ENCODE measurements at regions of chr13 and their contacts with region 1.

Region 1: DNA sequence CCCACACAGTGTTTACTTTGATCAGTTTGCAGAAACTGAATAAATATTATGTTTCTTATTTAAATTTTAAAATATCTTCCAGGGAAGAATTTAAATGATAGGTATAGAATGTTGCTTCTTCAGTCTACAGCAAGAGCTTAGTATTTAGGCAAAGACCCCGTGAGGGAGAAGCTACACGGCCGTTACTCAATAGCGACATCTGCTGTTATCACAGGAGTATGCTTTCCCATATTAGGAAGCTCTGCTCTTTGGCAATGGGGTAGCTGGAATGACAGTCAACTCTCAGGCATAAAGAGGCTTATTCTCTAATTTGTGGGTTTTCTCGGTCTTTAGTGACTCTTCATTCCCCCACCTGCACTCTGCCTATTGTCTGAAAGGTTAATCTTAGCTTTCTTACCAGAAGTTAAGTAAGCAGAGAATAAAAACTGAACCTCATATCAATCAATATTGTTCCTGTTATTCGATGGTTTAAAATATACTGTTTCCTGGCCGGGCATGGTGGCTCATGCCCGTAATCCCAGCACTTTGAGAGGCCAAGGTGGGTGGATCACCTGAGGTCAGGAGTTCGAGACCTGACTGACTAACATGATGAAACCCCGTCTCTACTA is 13.2 kb upstream of the LHFPL6 start:
- DNase-seq: peak; percentile 70
- H3K4me3 ChIP-seq: no peak overlapping the region
- H3K27ac ChIP-seq: no peak overlapping the region
- H3K4me1 ChIP-seq: no peaks in the 10 kb centered on the region
- H3K27me3 ChIP-seq: peaks cover 5 to 7% of the 10 kb centered on the region in 2 experiments
- CTCF ChIP-seq: peak; percentile 83 to 85
- POLR2A ChIP-seq: no peak

Region 2: GRCh38 chr13:38255296-38255995 is 1360.7 kb before region 1 on chr13:
- CTCF ChIA-PET with region 1: no interaction called
- POLR2A ChIA-PET with region 1: no interaction called
- dilution Hi-C with region 1: no loop called
- intact Hi-C with region 1: no loop called
- DNase-seq: no peak
- H3K4me3 ChIP-seq: no peak overlapping the region
- H3K27ac ChIP-seq: no peak overlapping the region
- H3K4me1 ChIP-seq: no peaks in the 10 kb centered on the region
- H3K27me3 ChIP-seq: no peaks in the 10 kb centered on the region
- CTCF ChIP-seq: no peak
- POLR2A ChIP-seq: no peak

Region 3: DNA sequence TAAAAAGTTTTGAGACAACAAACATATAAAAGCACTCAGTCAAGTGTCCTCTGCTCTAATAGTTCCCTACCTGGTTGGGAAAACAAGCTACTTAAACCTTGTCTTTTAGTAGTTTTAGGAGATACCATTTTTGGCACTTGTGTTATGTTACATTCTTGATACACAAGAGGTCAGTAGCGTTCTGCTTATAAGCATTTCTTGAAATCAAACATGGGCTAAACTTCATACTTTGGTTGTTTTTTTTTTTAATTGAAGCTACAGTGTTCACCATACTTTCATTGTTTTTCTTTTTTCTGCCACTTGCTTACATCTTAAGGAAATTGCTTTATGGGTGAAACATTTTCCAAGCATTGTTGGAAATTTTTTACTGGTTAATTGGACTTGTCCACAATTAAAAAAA is 565.0 kb before region 1 on chr13:
- CTCF ChIA-PET with region 1: interaction called, 129 read pairs
- POLR2A ChIA-PET with region 1: no interaction called
- dilution Hi-C with region 1: no loop called
- intact Hi-C with region 1: loop called (anchors 1 kb)
- DNase-seq: peak; percentile 57
- H3K4me3 ChIP-seq: no peak overlapping the region
- H3K27ac ChIP-seq: no peak overlapping the region
- H3K4me1 ChIP-seq: no peaks in the 10 kb centered on the region
- H3K27me3 ChIP-seq: no peaks in the 10 kb centered on the region
- CTCF ChIP-seq: peak; percentile 18 to 31
- POLR2A ChIP-seq: no peak

Region 4: DNA sequence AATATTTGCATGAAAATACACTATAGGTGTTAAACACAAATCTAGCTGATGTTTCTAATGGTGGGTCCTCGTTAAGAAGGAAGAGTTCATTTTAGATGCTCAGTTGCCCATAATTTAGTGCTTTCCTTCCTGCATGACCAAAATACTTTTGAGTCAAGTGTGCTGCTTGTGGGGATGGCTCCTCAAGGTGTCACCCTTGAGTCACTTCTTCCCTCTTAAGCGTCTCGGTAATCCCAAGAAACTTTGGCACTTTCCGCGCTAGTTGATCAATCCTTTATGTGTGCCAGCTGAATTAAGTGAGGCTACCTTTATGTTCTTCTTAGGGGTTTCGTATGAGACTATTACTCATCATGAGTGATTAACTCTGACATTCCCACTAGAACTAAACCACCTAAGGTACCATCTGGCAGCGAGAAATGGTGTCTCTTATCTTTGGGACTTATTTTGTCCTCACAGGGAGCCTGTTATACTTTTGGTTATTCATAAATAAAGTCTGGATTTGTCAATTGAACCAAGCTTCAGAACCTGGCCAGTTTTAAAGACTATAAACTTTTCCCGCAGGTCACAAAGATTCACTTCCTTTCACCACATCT is 471.2 kb before region 1 on chr13:
- CTCF ChIA-PET with region 1: interaction called, 149 read pairs
- POLR2A ChIA-PET with region 1: no interaction called
- dilution Hi-C with region 1: no loop called
- intact Hi-C with region 1: loop called (anchors 1 kb)
- DNase-seq: peak; percentile 65
- H3K4me3 ChIP-seq: no peak overlapping the region
- H3K27ac ChIP-seq: no peak overlapping the region
- H3K4me1 ChIP-seq: no peaks in the 10 kb centered on the region
- H3K27me3 ChIP-seq: peaks cover 13 to 24% of the 10 kb centered on the region in 2 experiments
- CTCF ChIP-seq: peak; percentile 63 to 79
- POLR2A ChIP-seq: no peak

Region 5: DNA sequence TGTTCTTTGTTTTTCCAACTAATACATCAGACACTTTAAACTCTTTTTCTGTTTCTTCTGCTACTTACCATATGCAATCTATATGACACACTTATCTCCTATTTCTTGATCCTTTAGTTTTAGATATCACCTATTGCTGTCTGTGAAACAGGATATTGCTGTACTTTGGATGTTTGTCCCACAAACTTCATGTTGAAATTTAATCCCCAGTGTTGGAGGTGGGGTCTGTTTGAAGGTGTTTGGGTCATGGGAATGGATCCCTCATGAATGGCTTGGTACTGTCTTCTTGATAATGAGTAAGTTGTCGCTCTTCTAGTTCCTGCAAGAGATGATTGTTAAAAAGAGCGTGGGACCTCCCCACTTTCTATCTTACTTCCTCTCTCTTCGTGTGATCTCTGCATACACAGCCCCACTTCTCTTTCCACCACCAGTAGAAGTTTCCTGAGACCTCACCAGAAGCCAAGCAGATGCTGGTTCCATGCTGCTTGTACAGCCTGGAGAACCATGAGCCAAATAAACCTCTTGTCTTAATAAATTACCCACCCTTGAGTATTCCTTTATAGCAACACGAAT is 333.7 kb before region 1 on chr13:
- CTCF ChIA-PET with region 1: interaction called, 29 read pairs
- POLR2A ChIA-PET with region 1: no interaction called
- dilution Hi-C with region 1: no loop called
- intact Hi-C with region 1: no loop called
- DNase-seq: no peak
- H3K4me3 ChIP-seq: no peak overlapping the region
- H3K27ac ChIP-seq: no peak overlapping the region
- H3K4me1 ChIP-seq: no peaks in the 10 kb centered on the region
- H3K27me3 ChIP-seq: peaks cover 2 to 10% of the 10 kb centered on the region in 2 experiments
- CTCF ChIP-seq: no peak
- POLR2A ChIP-seq: no peak

Region 6: DNA sequence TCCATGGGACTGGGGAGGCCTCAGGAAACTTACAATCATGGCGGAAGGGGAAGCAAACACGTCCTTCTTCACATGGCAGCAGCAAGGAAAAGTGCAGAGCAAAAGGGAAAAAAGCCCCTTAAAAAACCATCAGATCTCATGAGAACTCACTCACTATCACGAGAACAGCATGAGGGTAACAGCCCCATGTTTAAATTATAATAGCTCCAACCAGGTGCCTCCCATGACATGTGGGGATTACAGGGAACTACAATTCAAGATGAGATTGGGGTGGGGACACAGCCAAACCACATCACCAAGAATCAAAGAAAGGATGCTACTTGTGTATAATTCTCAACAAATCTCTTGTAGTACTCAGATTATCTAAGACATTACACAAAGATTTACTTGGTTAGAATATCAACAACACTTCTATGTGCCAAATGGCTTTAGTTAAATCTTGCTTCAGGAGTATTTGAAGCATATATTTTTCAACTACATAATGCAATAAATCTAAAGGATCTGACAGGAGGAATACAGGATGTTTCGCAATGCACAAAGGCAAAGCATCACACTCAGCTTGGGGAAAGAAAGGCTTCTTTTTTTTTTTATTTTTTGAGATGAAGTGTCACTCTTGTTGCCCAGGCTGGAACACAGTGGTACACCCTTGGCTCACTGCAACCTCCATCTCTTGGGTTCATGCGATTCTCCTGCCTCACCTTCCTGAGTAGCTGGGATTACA is 193.2 kb before region 1 on chr13:
- CTCF ChIA-PET with region 1: interaction called, 124 read pairs
- POLR2A ChIA-PET with region 1: no interaction called
- dilution Hi-C with region 1: no loop called
- intact Hi-C with region 1: no loop called
- DNase-seq: no peak
- H3K4me3 ChIP-seq: no peak overlapping the region
- H3K27ac ChIP-seq: no peak overlapping the region
- H3K4me1 ChIP-seq: peaks cover 1% of the 10 kb centered on the region
- H3K27me3 ChIP-seq: no peaks in the 10 kb centered on the region
- CTCF ChIP-seq: no peak
- POLR2A ChIP-seq: no peak

Region 7: DNA sequence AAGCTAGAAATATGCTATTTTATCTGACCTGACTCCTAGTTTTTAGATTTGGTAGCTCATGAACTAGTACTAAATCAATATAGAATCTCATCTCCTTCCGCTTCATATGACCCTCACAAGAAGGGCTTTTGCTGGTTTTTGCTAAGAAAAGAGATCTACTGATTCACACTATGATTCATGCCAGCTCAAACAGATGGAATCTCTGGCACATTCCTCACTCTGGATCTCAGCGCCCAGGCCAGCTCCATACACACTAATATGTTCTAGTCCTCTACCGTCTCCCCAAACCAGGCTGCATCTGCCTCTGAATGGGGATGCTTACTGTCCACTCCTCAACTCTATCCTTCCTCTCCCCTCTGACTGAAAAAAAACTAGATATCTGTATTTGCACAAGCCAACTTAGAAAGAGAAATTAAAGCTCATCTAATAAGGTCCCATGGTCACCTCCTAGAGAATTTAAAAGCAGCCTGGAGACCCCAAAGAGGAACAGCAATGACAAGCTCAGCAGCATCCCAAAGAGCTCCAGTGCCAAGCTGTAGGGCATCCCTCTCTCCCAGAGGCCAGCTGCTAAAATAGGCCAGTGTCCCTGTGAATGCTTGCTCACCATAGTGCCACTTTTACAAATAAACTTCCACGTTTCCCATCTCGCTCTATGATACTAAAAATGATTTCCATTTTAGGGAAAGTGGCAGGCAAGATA is 88.1 kb before region 1 on chr13:
- CTCF ChIA-PET with region 1: interaction called, 20 read pairs
- POLR2A ChIA-PET with region 1: no interaction called
- dilution Hi-C with region 1: no loop called
- intact Hi-C with region 1: no loop called
- DNase-seq: peak; percentile 80
- H3K4me3 ChIP-seq: no peak overlapping the region
- H3K27ac ChIP-seq: peak overlapping the region; percentile 66
- H3K4me1 ChIP-seq: peaks cover 15% of the 10 kb centered on the region
- H3K27me3 ChIP-seq: no peaks in the 10 kb centered on the region
- CTCF ChIP-seq: no peak
- POLR2A ChIP-seq: no peak

Region 8: GRCh38 chr13:39676315-39676876 is 60.2 kb after region 1 on chr13:
- CTCF ChIA-PET with region 1: interaction called, 15 read pairs
- POLR2A ChIA-PET with region 1: no interaction called
- dilution Hi-C with region 1: no loop called
- intact Hi-C with region 1: no loop called
- DNase-seq: peak; percentile 55
- H3K4me3 ChIP-seq: no peak overlapping the region
- H3K27ac ChIP-seq: no peak overlapping the region
- H3K4me1 ChIP-seq: no peaks in the 10 kb centered on the region
- H3K27me3 ChIP-seq: no peaks in the 10 kb centered on the region
- CTCF ChIP-seq: peak in 1 of 2 donors; percentile 26
- POLR2A ChIP-seq: no peak

Region 9: DNA sequence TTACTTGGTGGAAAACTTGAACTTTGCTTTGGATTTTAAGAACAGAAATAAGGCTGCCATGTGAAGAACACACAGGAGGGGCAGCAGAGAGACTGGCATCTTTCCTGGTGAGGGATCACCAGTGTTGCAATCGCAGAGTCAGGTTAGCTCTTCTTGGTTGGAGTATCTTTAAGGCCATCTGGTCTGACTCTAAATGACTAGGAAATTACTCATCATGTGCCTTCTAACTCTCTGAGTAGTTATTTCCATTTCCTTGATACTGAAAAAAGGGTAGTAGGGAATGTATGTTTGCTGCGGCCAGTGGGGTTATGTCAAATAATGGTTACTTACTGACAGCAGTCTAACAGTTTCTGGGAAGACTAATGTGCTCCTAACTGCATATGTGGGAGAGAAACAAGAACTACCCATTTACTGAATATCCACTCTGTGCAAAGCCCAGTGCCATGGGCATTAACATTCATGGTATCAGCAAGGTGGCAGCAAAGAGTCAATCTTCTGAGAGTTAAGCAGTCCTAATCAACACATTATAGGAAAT is 161.4 kb after region 1 on chr13:
- CTCF ChIA-PET with region 1: no interaction called
- POLR2A ChIA-PET with region 1: no interaction called
- dilution Hi-C with region 1: no loop called
- intact Hi-C with region 1: no loop called
- DNase-seq: peak; percentile 88
- H3K4me3 ChIP-seq: no peak overlapping the region
- H3K27ac ChIP-seq: peak overlapping the region; percentile 99
- H3K4me1 ChIP-seq: peaks cover 59% of the 10 kb centered on the region
- H3K27me3 ChIP-seq: no peaks in the 10 kb centered on the region
- CTCF ChIP-seq: peak; percentile 51 to 52
- POLR2A ChIP-seq: no peak

Region 10: DNA sequence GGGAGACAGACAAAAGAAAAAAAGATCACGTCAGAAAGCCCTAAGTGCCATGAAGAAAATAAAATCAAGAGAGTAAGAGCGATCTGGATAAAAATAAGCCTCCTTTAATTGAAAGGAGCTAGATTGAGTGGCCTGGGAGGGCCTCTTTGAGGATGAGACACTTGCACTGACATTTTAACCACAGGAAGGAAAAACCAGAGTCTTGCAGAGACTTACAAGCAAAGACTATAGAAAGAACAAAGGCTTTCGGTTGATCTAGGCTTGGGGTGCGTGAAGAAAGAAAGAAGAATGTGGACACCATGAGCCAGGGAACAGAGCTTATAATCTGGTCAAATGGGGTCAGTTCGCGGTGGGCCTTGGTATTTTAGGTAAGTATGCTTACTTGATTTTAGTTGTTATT is 382.0 kb after region 1 on chr13:
- CTCF ChIA-PET with region 1: no interaction called
- POLR2A ChIA-PET with region 1: no interaction called
- dilution Hi-C with region 1: no loop called
- intact Hi-C with region 1: no loop called
- DNase-seq: no peak
- H3K4me3 ChIP-seq: no peak overlapping the region
- H3K27ac ChIP-seq: no peak overlapping the region
- H3K4me1 ChIP-seq: no peaks in the 10 kb centered on the region
- H3K27me3 ChIP-seq: no peaks in the 10 kb centered on the region
- CTCF ChIP-seq: no peak
- POLR2A ChIP-seq: no peak